ENCODE measurements at regions of chr5 and their contacts with region 1.

Region 1: GRCh38 chr5:91345461-91345860 is 37.7 kb downstream of the ARRDC3 start:
- DNase-seq: no peak
- ATAC-seq: no peak
- H3K4me3 ChIP-seq: no peak overlapping the region
- H3K4me3 Mint-ChIP-seq: no peak overlapping the region
- H3K27ac ChIP-seq: no peak overlapping the region
- H3K27ac Mint-ChIP-seq: no peak overlapping the region
- H3K4me1 ChIP-seq: no peaks in the 10 kb centered on the region
- H3K4me1 Mint-ChIP-seq: peaks cover 0 to 6% (median 4%) of the 10 kb centered on the region in 3 donors
- H3K27me3 ChIP-seq: peaks cover 0 to 2% of the 10 kb centered on the region in 2 experiments
- H3K27me3 Mint-ChIP-seq: no peaks in the 10 kb centered on the region

Region 2: GRCh38 chr5:91311697-91312501 is 33.6 kb before region 1 on chr5:
- CTCF ChIA-PET with region 1: interaction called in 1 of 2 experiments, 12 read pairs
- POLR2A ChIA-PET with region 1: no interaction called
- DNase-seq: peak; percentile 35 to 84 (median 62)
- ATAC-seq: peak; percentile 79 to 88 (median 83)
- H3K4me3 ChIP-seq: no peak overlapping the region
- H3K4me3 Mint-ChIP-seq: peak overlapping the region; percentile 57 to 73 (median 72)
- H3K27ac ChIP-seq: peak overlapping the region; percentile 79
- H3K27ac Mint-ChIP-seq: peak overlapping the region; percentile 90 to 93
- H3K4me1 ChIP-seq: peaks cover 20 to 49% of the 10 kb centered on the region in 2 experiments
- H3K4me1 Mint-ChIP-seq: peaks cover 42 to 56% (median 55%) of the 10 kb centered on the region in 3 donors
- H3K27me3 ChIP-seq: no peaks in the 10 kb centered on the region
- H3K27me3 Mint-ChIP-seq: no peaks in the 10 kb centered on the region

Region 3: DNA sequence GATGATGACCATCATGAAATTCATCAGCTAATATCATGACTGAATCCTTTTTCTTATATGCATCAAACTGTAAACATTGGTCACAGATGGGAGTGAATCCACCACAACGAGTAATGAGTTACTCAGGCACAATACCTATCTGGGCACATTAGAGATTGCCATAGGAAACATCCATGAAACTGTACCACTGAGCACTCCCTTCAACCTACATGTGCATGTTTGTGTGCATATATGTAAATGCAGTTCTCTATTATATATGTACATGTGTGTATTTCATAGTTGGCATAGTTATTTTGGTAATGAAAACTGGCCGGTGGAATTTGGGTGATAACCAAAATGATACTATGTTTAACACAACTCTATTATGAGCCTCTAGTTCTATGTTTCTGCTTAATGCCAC is 424.9 kb after region 1 on chr5:
- CTCF ChIA-PET with region 1: no interaction called
- POLR2A ChIA-PET with region 1: no interaction called
- DNase-seq: no peak
- ATAC-seq: no peak
- H3K4me3 ChIP-seq: no peak overlapping the region
- H3K4me3 Mint-ChIP-seq: no peak overlapping the region
- H3K27ac ChIP-seq: no peak overlapping the region
- H3K27ac Mint-ChIP-seq: no peak overlapping the region
- H3K4me1 ChIP-seq: no peaks in the 10 kb centered on the region
- H3K4me1 Mint-ChIP-seq: no peaks in the 10 kb centered on the region
- H3K27me3 ChIP-seq: no peaks in the 10 kb centered on the region
- H3K27me3 Mint-ChIP-seq: no peaks in the 10 kb centered on the region